Activated CD8-positive, alpha-beta T cell treated with anti-CD3 and anti-CD28 coated beads, Interleukin-2, amount 10 ng/mL, durations not matched to agents 7 days and 5 days (primary cell): ENCODE measurements at regions of chr9 and their contacts with region 1.

Region 1: DNA sequence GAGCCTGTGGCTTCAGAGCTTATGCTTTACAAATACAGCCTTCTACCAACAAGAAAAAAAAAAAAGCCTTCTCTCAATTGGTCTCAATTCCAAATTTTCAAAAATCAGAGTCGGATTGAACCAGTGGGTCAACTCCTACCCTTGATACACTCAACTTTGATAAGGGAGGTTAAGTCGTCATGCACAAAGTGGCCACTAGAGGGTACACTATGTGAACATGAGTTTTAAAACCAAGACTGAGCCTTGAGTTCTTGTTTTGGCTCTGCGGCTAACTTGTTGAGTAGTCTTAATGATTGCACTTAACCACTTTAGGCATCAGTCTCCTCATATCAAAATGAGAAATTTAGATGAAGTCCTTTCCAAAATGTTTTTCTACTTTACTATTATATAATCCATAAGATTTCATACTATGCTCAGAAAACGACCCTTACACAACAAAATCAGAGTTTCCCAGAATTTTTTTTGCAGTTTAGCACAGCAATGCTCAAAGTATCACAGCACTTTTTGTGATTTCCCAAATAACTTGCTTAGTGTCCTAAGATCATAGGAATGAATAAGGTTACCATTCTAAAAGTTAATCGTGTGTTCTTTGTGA is 92.9 kb upstream of the MTAP start:
- DNase-seq: peak; percentile 81
- ATAC-seq: peak; percentile 68
- H3K4me3 Mint-ChIP-seq: no peak overlapping the region
- H3K27ac Mint-ChIP-seq: no peak overlapping the region
- H3K4me1 Mint-ChIP-seq: peaks cover 5% of the 10 kb centered on the region
- H3K27me3 Mint-ChIP-seq: peaks cover 12% of the 10 kb centered on the region

Region 2: GRCh38 chr9:21395778-21396717 is 313.5 kb before region 1 on chr9:
- CTCF ChIA-PET with region 1: no interaction called
- POLR2A ChIA-PET with region 1: no interaction called
- DNase-seq: peak; percentile 70
- ATAC-seq: peak; percentile 86
- H3K4me3 Mint-ChIP-seq: peak overlapping the region; percentile 48
- H3K27ac Mint-ChIP-seq: no peak overlapping the region
- H3K4me1 Mint-ChIP-seq: peaks cover 5% of the 10 kb centered on the region
- H3K27me3 Mint-ChIP-seq: peaks cover 53% of the 10 kb centered on the region

Region 3: DNA sequence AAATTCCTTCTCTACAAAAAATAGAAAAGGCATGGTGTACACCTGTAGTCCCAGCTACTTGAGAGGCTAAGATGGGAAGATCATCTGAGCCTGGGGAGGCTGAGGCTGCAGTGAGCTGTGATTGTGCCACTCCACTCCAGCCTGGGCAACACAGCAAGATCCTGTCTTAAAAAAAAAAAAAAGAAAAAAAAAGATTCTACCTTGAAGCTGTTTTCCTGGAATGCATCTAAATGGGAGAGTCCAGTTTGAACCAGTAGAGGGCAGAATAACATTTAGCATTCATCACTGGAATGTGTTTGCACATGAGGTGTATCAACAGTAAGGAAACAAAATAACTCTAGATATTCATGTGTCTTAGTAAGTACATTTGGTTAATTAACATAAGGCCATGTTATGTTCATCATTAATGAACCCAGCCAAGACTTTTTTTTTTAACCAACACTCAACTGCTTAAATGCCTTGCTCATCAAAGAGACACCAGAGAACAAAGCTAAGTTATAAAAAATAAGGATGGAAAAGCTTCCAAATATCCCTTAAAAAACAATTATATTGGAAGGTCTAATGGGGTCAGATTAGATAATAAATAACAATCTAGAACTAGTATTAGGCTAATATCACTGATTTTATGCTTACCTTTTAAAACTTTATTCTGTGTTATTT is 243.6 kb before region 1 on chr9:
- CTCF ChIA-PET with region 1: interaction called, 16 read pairs
- POLR2A ChIA-PET with region 1: no interaction called
- DNase-seq: peak; percentile 43
- ATAC-seq: peak; percentile 65
- H3K4me3 Mint-ChIP-seq: no peak overlapping the region
- H3K27ac Mint-ChIP-seq: no peak overlapping the region
- H3K4me1 Mint-ChIP-seq: no peaks in the 10 kb centered on the region
- H3K27me3 Mint-ChIP-seq: peaks cover 15% of the 10 kb centered on the region

Region 4: GRCh38 chr9:21559424-21560280 is 149.9 kb before region 1 on chr9:
- CTCF ChIA-PET with region 1: interaction called, 13 read pairs
- POLR2A ChIA-PET with region 1: no interaction called
- DNase-seq: peak; percentile 64
- ATAC-seq: peak; percentile 94
- H3K4me3 Mint-ChIP-seq: peak overlapping the region; percentile 91
- H3K27ac Mint-ChIP-seq: no peak overlapping the region
- H3K4me1 Mint-ChIP-seq: peaks cover 25% of the 10 kb centered on the region
- H3K27me3 Mint-ChIP-seq: peaks cover 34% of the 10 kb centered on the region

Region 5: DNA sequence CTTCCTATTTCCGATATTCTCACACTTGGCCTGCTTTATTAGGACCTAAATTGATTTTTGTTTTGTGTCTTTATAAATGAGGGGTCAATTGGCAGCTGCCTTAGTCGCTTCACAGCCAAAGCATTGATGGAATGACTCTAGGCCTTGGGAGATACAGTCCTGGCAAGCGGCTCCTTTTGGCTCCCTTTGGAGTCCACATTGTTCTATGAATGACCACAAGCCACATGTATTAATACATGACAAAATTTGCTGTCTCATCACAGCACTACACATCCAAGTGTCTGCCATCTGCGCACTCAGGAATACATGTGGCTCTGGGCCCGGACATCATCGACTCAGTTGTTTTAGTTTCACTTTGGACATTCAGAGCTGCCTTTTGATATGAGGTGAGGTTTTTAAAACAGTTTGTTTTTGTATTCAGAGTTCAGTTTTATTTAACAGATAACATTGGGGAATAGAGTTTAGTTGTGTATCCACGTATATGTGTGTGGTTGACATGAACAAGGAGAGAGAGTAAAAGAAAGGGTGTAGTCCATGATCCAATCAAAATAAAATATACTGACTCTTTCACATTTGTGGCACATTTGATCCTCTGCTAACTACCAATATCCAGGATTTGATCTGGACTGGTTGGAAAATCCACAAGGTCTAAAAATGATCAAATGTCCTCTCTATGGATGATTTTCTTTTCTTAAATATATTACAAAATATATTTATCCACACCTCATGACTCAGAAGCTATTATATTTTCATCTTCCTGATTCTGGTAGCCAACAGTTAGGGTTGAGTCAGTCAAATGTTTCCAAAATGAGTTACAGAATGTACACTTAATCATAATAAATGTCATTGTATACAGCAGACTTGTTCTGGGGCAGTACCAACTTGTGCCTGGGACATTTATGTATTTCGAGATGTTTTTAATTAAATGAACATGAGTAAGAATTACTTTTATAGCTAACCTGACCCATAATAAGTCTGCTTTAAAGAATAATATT is 21.2 kb before region 1 on chr9:
- CTCF ChIA-PET with region 1: interaction called, 13 read pairs
- POLR2A ChIA-PET with region 1: no interaction called
- DNase-seq: no peak
- ATAC-seq: no peak
- H3K4me3 Mint-ChIP-seq: peak overlapping the region; percentile 30
- H3K27ac Mint-ChIP-seq: peak overlapping the region; percentile 65
- H3K4me1 Mint-ChIP-seq: peaks cover 23% of the 10 kb centered on the region
- H3K27me3 Mint-ChIP-seq: no peaks in the 10 kb centered on the region

Region 6: DNA sequence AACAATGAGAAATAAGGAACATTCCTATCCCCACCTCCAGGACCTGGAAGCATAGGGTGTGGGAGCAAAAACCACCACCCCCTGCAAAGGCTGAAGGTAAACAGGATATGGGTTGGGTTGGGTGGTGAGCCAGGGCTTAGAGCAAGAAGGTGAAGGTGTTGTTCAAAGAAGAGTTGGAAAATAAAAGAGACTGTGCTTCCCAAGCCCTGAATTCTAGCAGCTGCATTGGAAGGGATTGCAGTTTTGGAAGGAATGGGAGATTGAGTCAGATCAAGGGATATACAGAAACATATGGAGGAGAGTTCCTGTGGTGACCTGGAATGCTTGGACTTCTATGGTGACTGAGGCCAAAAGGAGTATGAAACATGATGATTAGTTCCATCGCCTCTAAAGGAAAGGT is 68.1 kb after region 1 on chr9:
- CTCF ChIA-PET with region 1: interaction called, 18 read pairs
- POLR2A ChIA-PET with region 1: no interaction called
- DNase-seq: peak; percentile 44
- ATAC-seq: peak; percentile 58
- H3K4me3 Mint-ChIP-seq: no peak overlapping the region
- H3K27ac Mint-ChIP-seq: no peak overlapping the region
- H3K4me1 Mint-ChIP-seq: peaks cover 4% of the 10 kb centered on the region
- H3K27me3 Mint-ChIP-seq: peaks cover 3% of the 10 kb centered on the region

Region 7: GRCh38 chr9:21789541-21790037 is 80.0 kb after region 1 on chr9:
- CTCF ChIA-PET with region 1: interaction called, 40 read pairs
- POLR2A ChIA-PET with region 1: no interaction called
- DNase-seq: peak; percentile 71
- ATAC-seq: peak; percentile 97
- H3K4me3 Mint-ChIP-seq: peak overlapping the region; percentile 69
- H3K27ac Mint-ChIP-seq: no peak overlapping the region
- H3K4me1 Mint-ChIP-seq: peaks cover 6% of the 10 kb centered on the region
- H3K27me3 Mint-ChIP-seq: peaks cover 25% of the 10 kb centered on the region

Region 8: DNA sequence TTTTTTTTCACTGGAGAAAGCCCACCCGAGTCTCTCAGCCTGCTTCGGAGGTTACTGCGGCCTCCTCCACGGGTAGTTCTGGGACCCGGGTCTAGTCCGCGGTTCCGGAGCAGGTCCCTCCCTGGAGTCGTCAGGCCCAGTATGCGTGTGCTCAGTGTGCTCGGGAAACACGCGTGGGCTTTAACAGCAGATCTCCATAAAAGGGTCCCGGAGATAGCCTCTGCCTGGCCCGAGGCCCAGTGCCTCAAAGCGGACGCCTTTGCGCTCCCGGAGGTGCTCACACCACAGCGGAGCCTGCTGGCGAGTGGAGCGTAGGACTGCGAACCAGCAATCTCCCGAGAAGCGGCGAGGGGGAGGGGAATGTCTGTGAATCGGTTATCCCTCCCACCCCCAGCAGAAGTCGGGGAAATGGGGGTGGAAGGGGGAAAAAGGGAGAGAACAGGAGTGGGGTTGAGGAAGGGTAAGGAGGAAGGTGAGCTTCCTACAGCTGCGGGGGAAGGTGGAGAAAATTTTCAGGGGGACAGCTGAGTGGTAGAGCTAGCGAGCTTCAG is 255.9 kb after region 1 on chr9:
- CTCF ChIA-PET with region 1: no interaction called
- POLR2A ChIA-PET with region 1: no interaction called
- DNase-seq: peak; percentile 71
- ATAC-seq: peak; percentile 73
- H3K4me3 Mint-ChIP-seq: peak overlapping the region; percentile 55
- H3K27ac Mint-ChIP-seq: peak overlapping the region; percentile 12
- H3K4me1 Mint-ChIP-seq: peaks cover 42% of the 10 kb centered on the region
- H3K27me3 Mint-ChIP-seq: peaks cover 86% of the 10 kb centered on the region